ENCODE measurements at regions of chr3 and their contacts with region 1.

Region 1: GRCh38 chr3:56702490-56703315 is 19.6 kb upstream of the TASOR start:
- DNase-seq: peak; percentile 71
- H3K4me3 ChIP-seq: no peak overlapping the region
- H3K27ac ChIP-seq: no peak overlapping the region
- H3K4me1 ChIP-seq: peaks cover 3% of the 10 kb centered on the region
- H3K27me3 ChIP-seq: no peaks in the 10 kb centered on the region
- CTCF ChIP-seq: peak; percentile 83 to 90 (median 86)
- POLR2A ChIP-seq: no peak

Region 2: DNA sequence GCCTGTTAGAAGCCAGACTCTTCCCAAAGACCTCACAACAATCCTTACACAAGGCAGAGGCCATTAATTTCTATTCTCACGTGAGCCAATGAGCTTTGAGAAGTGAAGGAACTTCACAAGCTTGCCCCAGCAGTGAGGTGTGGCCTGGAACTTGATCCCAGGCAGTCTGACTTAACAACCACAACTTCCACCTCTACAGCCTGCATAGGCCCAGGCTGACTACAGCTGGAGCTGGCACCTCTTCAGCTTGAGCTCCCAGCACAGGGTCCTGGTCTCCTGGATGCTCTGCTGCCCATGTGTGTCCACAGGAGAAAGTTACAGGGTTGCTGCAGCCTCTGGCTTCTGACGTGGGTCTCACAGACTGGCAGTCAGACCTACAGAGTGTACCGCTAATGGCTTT is 345.4 kb before region 1 on chr3:
- intact Hi-C with region 1: no loop called
- DNase-seq: no peak
- H3K4me3 ChIP-seq: no peak overlapping the region
- H3K27ac ChIP-seq: no peak overlapping the region
- H3K4me1 ChIP-seq: no peaks in the 10 kb centered on the region
- H3K27me3 ChIP-seq: no peaks in the 10 kb centered on the region
- CTCF ChIP-seq: no peak
- POLR2A ChIP-seq: no peak

Region 3: DNA sequence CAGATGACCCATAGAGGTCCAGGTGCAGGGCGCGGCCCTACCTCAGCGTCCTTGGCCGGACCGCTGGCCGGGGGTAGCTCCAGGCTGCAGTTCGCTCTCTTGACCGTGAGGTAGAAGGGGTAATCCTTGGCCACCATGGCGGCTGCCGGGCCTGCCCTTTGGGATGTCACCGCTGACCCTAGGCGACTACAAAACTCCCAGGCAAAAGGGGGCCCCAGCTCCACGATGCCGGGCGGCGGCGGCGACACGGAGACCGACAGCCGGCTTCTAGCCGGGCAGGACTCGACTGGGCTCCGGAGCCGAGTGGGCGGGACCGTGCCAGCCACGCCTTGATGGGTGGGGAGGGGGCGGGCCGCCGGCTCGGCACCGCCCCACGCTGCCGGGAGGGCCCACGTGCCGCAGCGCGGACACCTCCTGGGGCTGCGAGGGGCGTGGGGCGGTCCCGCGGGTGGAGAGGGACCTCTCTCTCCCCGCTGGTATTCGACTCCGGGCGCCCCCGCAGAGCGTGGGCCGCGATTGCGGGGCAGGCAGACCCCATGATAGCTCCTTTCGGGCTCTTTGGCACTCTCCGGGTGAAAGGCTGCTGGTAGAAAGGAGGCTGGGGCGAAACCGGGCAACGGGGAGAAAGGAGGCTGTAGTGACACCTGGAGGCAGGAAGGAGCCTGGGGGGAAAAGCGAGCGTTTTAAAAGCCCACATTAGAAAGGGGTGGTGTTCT is 99.1 kb after region 1 on chr3 and contains the start of gene ARHGEF3:
- intact Hi-C with region 1: loop called (anchors 10 kb)
- DNase-seq: peak; percentile 89
- H3K4me3 ChIP-seq: peak within 1 kb of the TSS; percentile 55 to 74
- H3K27ac ChIP-seq: peak within 1 kb of the TSS; percentile 68 to 81
- H3K4me1 ChIP-seq: peaks cover 5% of the 10 kb centered on the region
- H3K27me3 ChIP-seq: no peaks in the 10 kb centered on the region
- CTCF ChIP-seq: peak in 2 of 3 experiments; percentile 9 to 13
- POLR2A ChIP-seq: peak; percentile 82
- total RNA-seq, gene ARHGEF3: 55.1 to 72.2 TPM

Region 4: GRCh38 chr3:56988458-56989168 is 285.9 kb after region 1 on chr3:
- intact Hi-C with region 1: loop called (anchors 5 kb)
- DNase-seq: peak; percentile 90
- H3K4me3 ChIP-seq: no peak overlapping the region
- H3K27ac ChIP-seq: no peak overlapping the region
- H3K4me1 ChIP-seq: peaks cover 56% of the 10 kb centered on the region
- H3K27me3 ChIP-seq: no peaks in the 10 kb centered on the region
- CTCF ChIP-seq: peak; percentile 85 to 93 (median 91)
- POLR2A ChIP-seq: no peak

Measured in testis (tissue), 5 donors.